Mammary epithelial cell (primary cell): ENCODE measurements at regions of chr10 and their contacts with region 1.

Region 1: DNA sequence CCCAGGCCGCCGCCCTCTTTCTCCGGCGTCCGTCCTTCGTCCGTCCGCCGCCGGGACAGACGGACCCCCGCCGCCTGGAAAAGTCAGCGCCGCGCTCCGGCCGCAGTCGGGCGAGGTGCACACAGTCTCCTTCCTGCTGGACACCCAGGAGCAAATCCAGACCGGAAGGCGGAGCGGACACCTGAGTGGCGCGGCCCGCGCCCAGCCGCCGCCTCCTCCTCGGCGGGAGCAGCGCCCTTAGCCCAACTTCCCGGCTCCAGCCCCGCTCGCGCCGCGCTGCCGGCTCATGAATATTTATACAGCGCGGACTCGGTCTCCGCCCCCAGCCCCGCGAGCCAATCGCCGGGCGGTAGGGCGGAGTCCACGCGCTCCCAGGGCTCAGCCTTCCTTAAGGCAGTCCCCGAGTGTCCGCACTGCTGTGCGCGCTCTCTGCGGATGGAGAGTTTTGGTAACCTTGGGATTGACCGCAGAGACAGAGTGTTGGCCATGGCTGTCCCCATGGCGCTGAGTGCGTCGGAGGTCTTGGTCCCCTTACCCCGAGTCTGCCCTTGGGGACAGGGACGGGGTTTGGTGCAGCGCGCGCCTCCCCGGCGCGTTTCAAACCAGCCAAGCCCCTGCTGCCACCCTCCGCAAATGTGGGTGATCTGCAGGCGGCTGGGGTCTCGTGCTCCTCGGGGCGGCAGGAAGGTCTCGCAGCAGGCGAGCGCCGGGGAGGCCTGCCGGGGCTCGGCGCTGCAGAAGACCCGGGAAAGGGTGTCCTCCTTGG is at the start of gene FZD8:
- DNase-seq: peak; percentile 95
- H3K4me3 ChIP-seq: peak within 1 kb of the TSS; percentile 55 to 72 (median 63)
- H3K27ac ChIP-seq: peak within 1 kb of the TSS; percentile 24
- H3K4me1 ChIP-seq: peaks cover 33% of the 10 kb centered on the region
- H3K27me3 ChIP-seq: no peaks in the 10 kb centered on the region
- CTCF ChIP-seq: peak in 1 of 2 donors; percentile 0
- total RNA-seq, gene FZD8: 17.8 to 21.2 TPM

Region 2: DNA sequence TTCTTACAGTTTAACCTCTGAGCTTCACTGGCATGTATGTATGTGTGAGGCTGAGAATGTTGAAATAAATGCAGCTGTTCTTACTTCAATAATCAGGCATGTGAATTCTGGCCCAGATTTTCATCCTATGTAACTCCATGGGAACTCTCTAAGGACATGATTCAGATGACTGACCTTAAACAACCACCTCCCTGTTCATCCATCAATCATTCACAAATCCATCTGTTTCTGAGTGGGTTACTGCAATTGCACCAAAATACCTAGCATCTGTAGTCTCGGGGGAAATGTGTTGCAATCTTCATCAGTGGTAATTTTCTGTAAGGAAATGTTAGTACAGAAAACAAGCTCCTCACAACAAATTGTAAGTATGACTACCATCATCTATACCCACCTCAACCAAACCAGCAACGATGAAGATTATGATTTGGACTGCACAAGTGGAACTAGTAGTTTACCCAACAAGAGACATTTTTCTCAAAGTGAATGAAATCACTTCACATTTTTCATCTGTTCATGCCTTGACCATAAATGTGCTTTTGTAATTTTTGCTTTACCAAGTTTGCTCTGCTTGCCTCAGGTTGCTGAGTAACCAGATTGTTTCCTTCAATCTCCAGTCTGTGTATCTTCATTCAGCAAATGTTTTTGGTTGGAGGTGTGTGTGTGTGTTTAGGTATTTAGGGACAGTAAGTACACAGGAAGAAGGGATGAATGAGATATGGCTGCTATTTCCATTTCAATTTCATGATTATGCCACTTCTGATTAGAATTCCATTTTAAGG is 65.6 kb after region 1 on chr10:
- CTCF ChIA-PET with region 1: interaction called, 30 read pairs
- dilution Hi-C with region 1: no loop called
- in situ Hi-C with region 1: no loop called
- intact Hi-C with region 1: no loop called
- DNase-seq: no peak
- H3K4me3 ChIP-seq: no peak overlapping the region
- H3K27ac ChIP-seq: no peak overlapping the region
- H3K4me1 ChIP-seq: no peaks in the 10 kb centered on the region
- H3K27me3 ChIP-seq: no peaks in the 10 kb centered on the region
- CTCF ChIP-seq: no peak

Region 3: DNA sequence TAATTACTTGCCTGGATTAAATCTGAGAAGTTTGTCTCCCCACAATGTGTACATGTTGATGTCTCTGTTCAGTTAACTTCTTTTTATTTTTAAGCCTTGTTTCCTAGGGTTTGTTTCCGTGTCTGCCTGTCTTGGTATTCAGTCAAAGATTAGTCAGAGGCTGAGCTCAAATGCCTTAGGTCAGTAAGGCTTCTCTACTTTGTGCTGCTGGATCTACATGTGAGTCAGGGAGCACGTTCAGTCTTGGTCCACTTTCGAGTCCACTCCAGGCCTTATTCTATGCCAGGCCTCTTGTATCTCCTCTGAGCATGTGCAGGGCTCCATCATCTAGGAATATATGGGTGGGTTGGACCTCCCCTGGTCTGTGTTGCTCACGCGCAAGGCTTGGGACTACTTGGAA is 93.2 kb after region 1 on chr10:
- CTCF ChIA-PET with region 1: no interaction called
- dilution Hi-C with region 1: no loop called
- in situ Hi-C with region 1: no loop called
- intact Hi-C with region 1: loop called (anchors 5 kb)
- DNase-seq: peak; percentile 72
- H3K4me3 ChIP-seq: no peak overlapping the region
- H3K27ac ChIP-seq: no peak overlapping the region
- H3K4me1 ChIP-seq: peaks cover 2% of the 10 kb centered on the region
- H3K27me3 ChIP-seq: no peaks in the 10 kb centered on the region
- CTCF ChIP-seq: no peak

Region 4: GRCh38 chr10:35822316-35822715 is 180.1 kb after region 1 on chr10:
- CTCF ChIA-PET with region 1: no interaction called
- dilution Hi-C with region 1: no loop called
- in situ Hi-C with region 1: no loop called
- intact Hi-C with region 1: loop called (anchors 5 kb)
- DNase-seq: peak; percentile 77
- H3K4me3 ChIP-seq: no peak overlapping the region
- H3K27ac ChIP-seq: no peak overlapping the region
- H3K4me1 ChIP-seq: peaks cover 11% of the 10 kb centered on the region
- H3K27me3 ChIP-seq: no peaks in the 10 kb centered on the region
- CTCF ChIP-seq: peak; percentile 46 to 74

Region 5: GRCh38 chr10:35916791-35917190 is 274.6 kb after region 1 on chr10:
- CTCF ChIA-PET with region 1: no interaction called
- dilution Hi-C with region 1: no loop called
- in situ Hi-C with region 1: loop called in 1 of 2 experiments (anchors 25 kb)
- intact Hi-C with region 1: loop called (anchors 1 kb)
- DNase-seq: no peak
- H3K4me3 ChIP-seq: no peak overlapping the region
- H3K27ac ChIP-seq: no peak overlapping the region
- H3K4me1 ChIP-seq: peaks cover 19% of the 10 kb centered on the region
- H3K27me3 ChIP-seq: no peaks in the 10 kb centered on the region
- CTCF ChIP-seq: peak; percentile 7 to 52

Region 6: DNA sequence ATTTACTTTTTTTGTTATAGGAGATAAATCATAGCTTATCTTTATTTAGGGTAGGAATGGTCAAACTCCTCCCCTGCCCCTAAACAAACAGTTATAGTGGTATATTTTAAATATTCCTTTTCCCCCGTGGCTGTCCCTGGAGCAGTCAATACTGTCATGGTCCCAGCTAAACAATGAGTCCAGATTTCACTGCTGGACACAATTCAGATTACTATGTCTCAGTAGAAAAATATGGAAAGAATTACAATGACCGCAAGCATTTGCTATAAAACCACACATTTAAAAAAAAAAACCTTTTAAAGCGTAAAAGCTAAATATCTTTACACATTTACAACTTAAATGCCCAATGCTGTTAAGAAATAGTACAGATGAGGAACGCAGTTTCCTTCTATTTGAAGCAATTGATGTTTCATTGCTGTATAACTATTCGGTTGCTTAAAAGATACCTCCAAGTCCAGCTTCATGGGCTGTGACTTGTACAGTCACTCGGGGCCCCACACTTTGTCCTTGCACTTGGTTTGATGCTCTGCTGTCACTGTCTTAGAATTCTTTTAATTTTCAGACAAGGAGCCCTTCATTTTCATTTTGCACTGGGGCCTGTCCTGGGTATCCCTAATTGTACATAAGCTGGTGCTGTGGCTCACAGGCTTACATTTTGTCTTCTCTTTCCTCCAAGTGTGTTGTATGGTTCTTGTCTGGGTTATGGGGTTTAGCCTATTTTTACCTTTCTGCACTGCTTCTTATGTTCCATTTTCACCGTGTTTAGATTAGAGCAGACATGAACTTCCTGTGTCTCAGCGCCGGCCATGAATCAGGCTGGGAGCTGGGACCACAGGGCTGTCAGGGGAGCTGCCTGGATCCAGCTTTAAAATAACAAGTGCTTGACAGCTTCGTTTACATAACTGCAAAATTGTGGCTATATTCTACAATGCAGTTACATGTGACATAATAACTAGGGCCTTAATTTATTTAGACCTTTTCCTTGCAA is 530.0 kb after region 1 on chr10:
- CTCF ChIA-PET with region 1: no interaction called
- dilution Hi-C with region 1: no loop called
- in situ Hi-C with region 1: no loop called
- intact Hi-C with region 1: loop called (anchors 5 kb)
- DNase-seq: peak; percentile 64
- H3K4me3 ChIP-seq: peak overlapping the region in 1 of 3 experiments; percentile 18
- H3K27ac ChIP-seq: peak overlapping the region; percentile 61
- H3K4me1 ChIP-seq: peaks cover 27% of the 10 kb centered on the region
- H3K27me3 ChIP-seq: no peaks in the 10 kb centered on the region
- CTCF ChIP-seq: no peak

Region 7: GRCh38 chr10:36349445-36350078 is 707.4 kb after region 1 on chr10:
- CTCF ChIA-PET with region 1: no interaction called
- dilution Hi-C with region 1: no loop called
- in situ Hi-C with region 1: no loop called
- intact Hi-C with region 1: loop called (anchors 5 kb)
- DNase-seq: peak; percentile 92
- H3K4me3 ChIP-seq: peak overlapping the region in 2 of 3 experiments; percentile 2 to 19
- H3K27ac ChIP-seq: peak overlapping the region; percentile 79
- H3K4me1 ChIP-seq: peaks cover 29% of the 10 kb centered on the region
- H3K27me3 ChIP-seq: no peaks in the 10 kb centered on the region
- CTCF ChIP-seq: peak in 1 of 2 donors; percentile 19